Gastrocnemius medialis (tissue), 4 donors: ENCODE measurements at regions of chr11 and their contacts with region 1.

Region 1: DNA sequence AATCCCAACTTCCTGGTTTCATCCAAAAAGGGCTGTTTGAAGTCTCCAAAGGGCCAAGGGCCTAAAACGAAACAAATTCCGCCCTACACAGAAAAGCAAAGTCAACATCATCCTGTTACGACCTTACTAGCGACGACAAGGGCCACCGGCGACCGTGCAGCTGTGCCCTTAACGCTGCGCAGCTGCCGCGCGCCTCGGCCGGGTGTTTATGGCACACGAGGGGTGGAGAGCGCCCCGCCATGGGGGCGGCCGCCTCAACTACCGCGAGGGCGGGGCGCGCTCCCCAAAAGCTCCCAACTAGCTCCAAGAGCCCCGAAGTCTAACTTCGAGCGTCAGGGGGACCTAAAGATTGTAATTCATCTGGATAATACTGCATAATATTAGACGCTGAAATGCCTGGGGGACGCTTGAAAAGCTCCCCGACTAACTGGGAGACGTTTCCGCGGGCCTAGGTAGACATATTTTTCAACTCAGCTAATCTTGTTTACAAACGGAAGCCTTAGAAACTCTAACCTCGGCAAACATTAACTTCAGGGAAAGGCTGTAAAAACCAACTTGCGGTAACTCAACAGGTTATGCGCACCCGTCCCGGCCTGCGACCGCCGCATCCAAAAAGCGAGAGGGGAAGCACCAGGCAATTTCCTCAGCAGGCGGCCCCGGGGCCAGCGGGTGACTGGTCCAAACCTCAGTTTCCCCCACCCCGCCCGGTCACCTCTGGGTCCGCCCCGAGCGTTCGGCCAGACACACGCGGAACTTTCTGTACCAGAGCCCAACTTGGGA is 694 bp downstream of the TMEM123 start:
- DNase-seq: peak; percentile 17 to 26
- ATAC-seq: peak; percentile 52
- H3K4me3 ChIP-seq: peak overlapping the region; percentile 58 to 91 (median 82)
- H3K27ac ChIP-seq: peak overlapping the region; percentile 78 to 80 (median 79)
- H3K4me1 ChIP-seq: peaks cover 10 to 13% of the 10 kb centered on the region in 2 donors
- H3K27me3 ChIP-seq: no peaks in the 10 kb centered on the region
- CTCF ChIP-seq: peak in 1 of 5 experiments; percentile 16
- POLR2A ChIP-seq: peak in 1 of 2 donors; percentile 41

Region 2: GRCh38 chr11:102287964-102288724 is 163.7 kb before region 1 on chr11:
- in situ Hi-C with region 1: no loop called
- intact Hi-C with region 1: no loop called
- DNase-seq: no peak
- ATAC-seq: peak; percentile 78 to 90
- H3K4me3 ChIP-seq: no peak overlapping the region
- H3K27ac ChIP-seq: no peak overlapping the region
- H3K4me1 ChIP-seq: no peaks in the 10 kb centered on the region
- H3K27me3 ChIP-seq: no peaks in the 10 kb centered on the region
- CTCF ChIP-seq: peak; percentile 62 to 78 (median 68)
- POLR2A ChIP-seq: no peak

Region 3: DNA sequence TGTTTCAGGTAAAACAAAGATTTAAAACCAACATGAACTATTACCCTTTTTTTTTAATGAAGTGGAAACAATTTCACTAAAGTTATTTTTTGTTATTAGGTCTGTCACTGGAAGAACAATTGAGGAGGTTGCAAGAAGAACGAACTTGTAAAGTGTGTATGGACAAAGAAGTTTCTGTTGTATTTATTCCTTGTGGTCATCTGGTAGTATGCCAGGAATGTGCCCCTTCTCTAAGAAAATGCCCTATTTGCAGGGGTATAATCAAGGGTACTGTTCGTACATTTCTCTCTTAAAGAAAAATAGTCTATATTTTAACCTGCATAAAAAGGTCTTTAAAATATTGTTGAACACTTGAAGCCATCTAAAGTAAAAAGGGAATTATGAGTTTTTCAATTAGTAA is 74.0 kb before region 1 on chr11:
- in situ Hi-C with region 1: no loop called
- intact Hi-C with region 1: no loop called
- DNase-seq: no peak
- ATAC-seq: no peak
- H3K4me3 ChIP-seq: no peak overlapping the region
- H3K27ac ChIP-seq: no peak overlapping the region
- H3K4me1 ChIP-seq: peaks cover 6 to 13% of the 10 kb centered on the region in 2 donors
- H3K27me3 ChIP-seq: no peaks in the 10 kb centered on the region
- CTCF ChIP-seq: no peak
- POLR2A ChIP-seq: no peak

Region 4: DNA sequence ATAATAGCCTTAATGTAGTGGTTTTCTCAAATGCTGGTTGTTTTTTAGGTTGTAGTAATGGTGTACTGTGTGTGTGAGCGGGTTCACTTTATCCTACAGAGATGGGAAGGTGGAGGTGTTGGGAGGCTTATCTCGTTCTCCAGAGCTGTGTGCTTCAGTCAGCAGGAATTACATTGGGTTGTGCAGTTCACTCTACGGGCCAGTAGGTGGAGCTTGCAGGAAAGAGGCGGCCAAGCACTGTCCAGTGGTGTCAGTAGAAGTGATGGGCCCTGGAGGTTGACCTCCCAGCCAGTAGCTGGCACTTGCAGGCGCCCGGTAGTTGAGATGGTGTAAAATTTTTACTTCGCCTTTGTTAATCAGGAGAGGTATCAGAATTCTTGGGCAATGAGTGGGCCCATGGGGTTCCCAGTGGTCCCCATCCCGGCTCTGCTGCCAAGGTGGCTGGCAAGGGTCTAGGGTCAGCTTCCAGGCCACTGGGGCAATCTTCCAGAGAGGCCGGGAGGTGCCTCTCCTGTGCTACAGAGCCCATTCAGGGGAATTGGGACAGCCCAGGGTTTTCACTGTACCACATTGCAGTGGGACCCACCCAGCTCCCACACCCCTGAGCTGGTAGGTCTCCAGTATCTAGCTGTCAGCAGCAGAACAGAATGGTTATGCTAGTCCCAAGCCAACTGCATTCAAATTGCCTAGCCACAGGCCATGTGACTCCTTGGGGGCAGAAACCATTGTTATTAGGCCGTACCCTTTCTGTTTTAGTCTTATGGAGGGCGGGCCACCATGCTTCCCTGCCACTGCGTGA is 61.0 kb before region 1 on chr11:
- in situ Hi-C with region 1: no loop called
- intact Hi-C with region 1: loop called (anchors 5 kb)
- DNase-seq: peak; percentile 25 to 44
- ATAC-seq: peak; percentile 76 to 93
- H3K4me3 ChIP-seq: no peak overlapping the region
- H3K27ac ChIP-seq: no peak overlapping the region
- H3K4me1 ChIP-seq: peaks cover 0 to 3% of the 10 kb centered on the region in 2 donors
- H3K27me3 ChIP-seq: no peaks in the 10 kb centered on the region
- CTCF ChIP-seq: peak; percentile 42 to 82 (median 78)
- POLR2A ChIP-seq: no peak

Region 5: GRCh38 chr11:102495161-102496042 is 43.5 kb after region 1 on chr11:
- in situ Hi-C with region 1: no loop called
- intact Hi-C with region 1: no loop called
- DNase-seq: peak in 1 of 2 donors; percentile 13
- ATAC-seq: peak; percentile 78 to 83
- H3K4me3 ChIP-seq: no peak overlapping the region
- H3K27ac ChIP-seq: no peak overlapping the region
- H3K4me1 ChIP-seq: no peaks in the 10 kb centered on the region
- H3K27me3 ChIP-seq: peaks cover 0 to 4% (median 0%) of the 10 kb centered on the region in 3 donors
- CTCF ChIP-seq: peak; percentile 42 to 70 (median 63)
- POLR2A ChIP-seq: no peak